ENCODE measurements at regions of chr3 and their contacts with region 1.

Region 1: GRCh38 chr3:38327335-38328009 is 19.1 kb upstream of the XYLB start:
- DNase-seq: no peak
- H3K4me3 ChIP-seq: no peak overlapping the region
- H3K27ac ChIP-seq: no peak overlapping the region
- H3K4me1 ChIP-seq: no peaks in the 10 kb centered on the region
- H3K27me3 ChIP-seq: no peaks in the 10 kb centered on the region
- CTCF ChIP-seq: no peak
- POLR2A ChIP-seq: no peak

Region 2: GRCh38 chr3:38297947-38298711 is 29.3 kb before region 1 on chr3:
- intact Hi-C with region 1: no loop called
- DNase-seq: no peak
- H3K4me3 ChIP-seq: no peak overlapping the region
- H3K27ac ChIP-seq: no peak overlapping the region
- H3K4me1 ChIP-seq: no peaks in the 10 kb centered on the region
- H3K27me3 ChIP-seq: no peaks in the 10 kb centered on the region
- CTCF ChIP-seq: peak in 2 of 3 donors; percentile 4 to 14
- POLR2A ChIP-seq: no peak

Region 3: DNA sequence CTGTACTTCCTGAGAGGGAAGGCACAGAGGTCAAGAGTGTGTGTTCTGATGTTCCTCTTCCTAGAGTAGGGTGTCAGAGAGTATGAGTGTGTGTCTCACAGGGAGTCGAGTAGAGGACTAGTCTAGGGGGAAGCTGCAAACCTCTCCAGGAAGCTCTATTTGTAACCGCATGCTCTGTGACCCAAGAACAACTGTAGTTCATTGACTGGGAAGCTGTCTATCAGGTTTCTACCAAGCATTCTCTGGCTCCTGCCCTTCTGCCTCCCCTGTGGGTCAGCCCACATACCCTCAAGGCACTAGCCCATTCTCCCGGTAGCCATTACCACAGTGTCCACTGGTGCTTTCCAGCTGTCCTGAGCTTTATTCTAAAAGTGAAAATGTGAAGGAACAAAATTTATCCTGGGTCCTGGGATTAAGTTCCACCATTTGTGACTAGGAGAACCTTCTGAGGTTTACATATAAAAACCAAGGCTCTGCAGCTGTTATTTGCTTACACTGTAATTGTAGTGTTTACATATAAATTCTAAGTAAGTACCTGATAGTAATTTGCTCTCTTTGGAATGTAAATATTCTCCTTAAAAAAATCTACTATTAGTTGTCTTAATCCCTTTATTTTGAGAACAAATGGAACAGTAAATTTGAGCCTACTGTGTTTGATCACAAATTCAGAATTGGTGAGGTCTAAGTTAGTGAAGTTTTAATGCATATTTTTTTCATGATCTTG is 1522.7 kb after region 1 on chr3:
- intact Hi-C with region 1: loop called (anchors 10 kb)
- DNase-seq: no peak
- H3K4me3 ChIP-seq: no peak overlapping the region
- H3K27ac ChIP-seq: no peak overlapping the region
- H3K4me1 ChIP-seq: no peaks in the 10 kb centered on the region
- H3K27me3 ChIP-seq: no peaks in the 10 kb centered on the region
- CTCF ChIP-seq: no peak
- POLR2A ChIP-seq: no peak

Measured in breast epithelium (tissue), 4 donors.